Sigmoid colon (tissue), 7 donors: ENCODE measurements at regions of chr7 and their contacts with region 1.

Region 1: GRCh38 chr7:134891262-134891695 is 95.0 kb upstream of the AGBL3 start:
- DNase-seq: peak; percentile 94
- H3K4me3 ChIP-seq: peak overlapping the region; percentile 30 to 41 (median 40)
- H3K27ac ChIP-seq: peak overlapping the region; percentile 78 to 88 (median 80)
- H3K4me1 ChIP-seq: peaks cover 0 to 79% (median 66%) of the 10 kb centered on the region in 4 donors
- H3K27me3 ChIP-seq: no peaks in the 10 kb centered on the region
- CTCF ChIP-seq: no peak
- EP300 ChIP-seq: peak in 2 of 4 donors; percentile 50 to 56
- POLR2A ChIP-seq: no peak

Region 2: GRCh38 chr7:134444198-134444871 is 446.9 kb before region 1 on chr7:
- intact Hi-C with region 1: no loop called
- DNase-seq: no peak
- H3K4me3 ChIP-seq: no peak overlapping the region
- H3K27ac ChIP-seq: no peak overlapping the region
- H3K4me1 ChIP-seq: no peaks in the 10 kb centered on the region
- H3K27me3 ChIP-seq: no peaks in the 10 kb centered on the region
- CTCF ChIP-seq: no peak
- EP300 ChIP-seq: no peak
- POLR2A ChIP-seq: no peak

Region 3: DNA sequence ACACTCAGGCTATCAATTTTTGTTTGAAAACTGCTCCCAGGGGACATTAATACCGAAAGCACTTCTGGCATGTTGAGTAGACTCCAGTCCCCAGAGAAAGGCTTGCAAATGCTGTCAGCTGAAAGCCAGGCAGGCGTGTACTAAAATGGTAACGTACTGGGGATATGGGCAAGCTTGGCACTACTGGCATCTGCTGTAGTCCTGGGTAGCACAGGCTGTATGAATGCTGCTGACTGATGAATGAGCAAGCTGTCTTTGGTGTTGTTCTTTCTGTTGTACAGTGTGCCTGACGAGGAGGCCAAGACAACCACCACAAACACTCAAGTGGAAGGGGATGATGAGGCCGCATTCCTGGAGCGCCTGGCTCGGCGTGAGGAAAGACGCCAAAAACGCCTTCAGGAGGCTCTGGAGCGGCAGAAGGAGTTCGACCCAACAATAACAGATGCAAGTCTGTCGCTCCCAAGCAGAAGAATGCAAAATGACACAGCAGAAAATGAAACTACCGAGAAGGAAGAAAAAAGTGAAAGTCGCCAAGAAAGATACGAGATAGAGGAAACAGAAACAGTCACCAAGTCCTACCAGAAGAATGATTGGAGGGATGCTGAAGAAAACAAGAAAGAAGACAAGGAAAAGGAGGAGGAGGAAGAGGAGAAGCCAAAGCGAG is 41.6 kb after region 1 on chr7:
- intact Hi-C with region 1: loop called (anchors 5 kb)
- DNase-seq: peak; percentile 82
- H3K4me3 ChIP-seq: peak overlapping the region in 1 of 4 donors; percentile 8
- H3K27ac ChIP-seq: peak overlapping the region; percentile 69 to 86 (median 84)
- H3K4me1 ChIP-seq: peaks cover 0 to 70% (median 40%) of the 10 kb centered on the region in 4 donors
- H3K27me3 ChIP-seq: no peaks in the 10 kb centered on the region
- CTCF ChIP-seq: no peak
- EP300 ChIP-seq: no peak
- POLR2A ChIP-seq: no peak